Naive thymus-derived CD4-positive, alpha-beta T cell (primary cell): ENCODE measurements at regions of chr14 and their contacts with region 1.

Region 1: GRCh38 chr14:53217295-53217994 is 64.3 kb upstream of the DDHD1 start:
- DNase-seq: peak; percentile 51 to 85 (median 67)
- ATAC-seq: peak; percentile 96
- H3K4me3 ChIP-seq: peak overlapping the region; percentile 72
- H3K4me3 Mint-ChIP-seq: peak overlapping the region; percentile 70 to 94 (median 90)
- H3K27ac ChIP-seq: peak overlapping the region; percentile 56
- H3K27ac Mint-ChIP-seq: peak overlapping the region in 8 of 9 donors; percentile 46 to 90 (median 76)
- H3K4me1 ChIP-seq: peaks cover 5 to 6% of the 10 kb centered on the region in 2 donors
- H3K4me1 Mint-ChIP-seq: peaks cover 5 to 20% (median 12%) of the 10 kb centered on the region in 7 donors
- H3K27me3 ChIP-seq: no peaks in the 10 kb centered on the region
- H3K27me3 Mint-ChIP-seq: peaks cover 0 to 2% (median 0%) of the 10 kb centered on the region in 5 donors

Region 2: DNA sequence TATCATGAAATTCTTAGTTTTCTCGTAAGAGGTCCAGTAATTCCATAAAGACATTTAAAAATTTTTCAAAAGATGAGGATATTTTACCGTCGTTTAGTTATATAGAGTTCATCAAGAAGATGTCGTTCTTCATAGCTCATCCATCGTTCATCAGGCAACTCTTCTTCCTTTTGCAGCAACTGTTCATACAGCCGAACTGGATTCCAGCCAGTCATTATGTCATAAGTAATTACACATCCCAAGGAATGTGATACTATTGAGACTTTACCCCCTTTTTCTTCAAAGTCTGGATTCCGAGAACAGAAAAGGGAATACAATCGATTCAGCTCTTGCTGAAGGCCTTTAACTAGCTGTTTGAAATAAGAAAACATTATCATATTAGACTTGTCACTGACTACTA is 154.6 kb before region 1 on chr14:
- CTCF ChIA-PET with region 1: no interaction called
- POLR2A ChIA-PET with region 1: no interaction called
- intact Hi-C with region 1: loop called in 1 of 2 experiments (anchors 5 kb)
- DNase-seq: no peak
- ATAC-seq: no peak
- H3K4me3 ChIP-seq: no peak overlapping the region
- H3K4me3 Mint-ChIP-seq: no peak overlapping the region
- H3K27ac ChIP-seq: no peak overlapping the region
- H3K27ac Mint-ChIP-seq: peak overlapping the region in 1 of 9 donors; percentile 47
- H3K4me1 ChIP-seq: no peaks in the 10 kb centered on the region
- H3K4me1 Mint-ChIP-seq: peaks cover 0 to 9% (median 0%) of the 10 kb centered on the region in 7 donors
- H3K27me3 ChIP-seq: no peaks in the 10 kb centered on the region
- H3K27me3 Mint-ChIP-seq: no peaks in the 10 kb centered on the region

Region 3: GRCh38 chr14:53331247-53331646 is 113.8 kb after region 1 on chr14:
- CTCF ChIA-PET with region 1: no interaction called
- POLR2A ChIA-PET with region 1: no interaction called
- intact Hi-C with region 1: no loop called
- DNase-seq: no peak
- ATAC-seq: no peak
- H3K4me3 ChIP-seq: no peak overlapping the region
- H3K4me3 Mint-ChIP-seq: no peak overlapping the region
- H3K27ac ChIP-seq: no peak overlapping the region
- H3K27ac Mint-ChIP-seq: no peak overlapping the region
- H3K4me1 ChIP-seq: no peaks in the 10 kb centered on the region
- H3K4me1 Mint-ChIP-seq: no peaks in the 10 kb centered on the region
- H3K27me3 ChIP-seq: no peaks in the 10 kb centered on the region
- H3K27me3 Mint-ChIP-seq: peaks cover 0 to 1% (median 0%) of the 10 kb centered on the region in 5 donors

Region 4: DNA sequence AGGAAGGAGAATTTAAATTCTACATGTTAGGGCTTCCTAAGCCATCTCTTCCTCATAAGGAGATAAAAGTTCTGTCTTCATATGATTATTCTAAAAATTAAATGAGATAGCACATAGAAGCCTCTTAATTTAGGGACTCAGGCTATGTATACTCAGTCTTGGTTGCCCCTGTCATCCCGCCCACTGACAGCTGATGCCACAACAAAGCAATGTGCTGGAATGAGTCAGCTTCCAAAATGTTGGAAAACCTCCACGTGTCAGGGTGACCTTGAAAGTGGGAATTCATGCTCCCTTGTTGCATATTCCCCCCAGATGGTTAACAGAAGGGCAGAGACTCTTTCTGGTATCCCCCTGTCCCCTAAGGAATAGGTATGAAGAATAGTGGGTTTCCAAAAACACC is 173.7 kb after region 1 on chr14:
- CTCF ChIA-PET with region 1: no interaction called
- POLR2A ChIA-PET with region 1: no interaction called
- intact Hi-C with region 1: no loop called
- DNase-seq: no peak
- ATAC-seq: no peak
- H3K4me3 ChIP-seq: no peak overlapping the region
- H3K4me3 Mint-ChIP-seq: no peak overlapping the region
- H3K27ac ChIP-seq: no peak overlapping the region
- H3K27ac Mint-ChIP-seq: no peak overlapping the region
- H3K4me1 ChIP-seq: no peaks in the 10 kb centered on the region
- H3K4me1 Mint-ChIP-seq: no peaks in the 10 kb centered on the region
- H3K27me3 ChIP-seq: no peaks in the 10 kb centered on the region
- H3K27me3 Mint-ChIP-seq: no peaks in the 10 kb centered on the region